ENCODE measurements at regions of chr12 and their contacts with region 1.

Region 1: DNA sequence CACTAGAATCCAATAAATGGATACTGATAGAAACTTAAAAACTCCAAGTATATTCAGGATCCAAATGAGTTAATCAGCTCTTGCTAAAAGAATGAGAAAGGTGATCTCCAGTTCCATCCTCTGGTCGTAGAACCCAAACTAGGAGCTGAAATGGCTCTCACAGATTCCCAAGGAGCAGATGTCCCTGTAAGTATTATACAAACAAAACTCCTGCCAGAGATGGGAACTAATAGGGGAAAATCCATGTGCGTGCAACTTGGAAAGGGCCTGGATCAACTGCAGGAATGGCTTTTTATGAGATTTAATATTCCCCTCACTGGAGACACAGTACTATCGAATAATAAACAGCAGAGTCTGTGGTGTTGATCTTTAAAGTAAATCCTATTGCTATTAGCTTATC is 309.2 kb upstream of the TBX3 start:
- DNase-seq: no peak
- H3K4me3 ChIP-seq: no peak overlapping the region
- H3K27ac ChIP-seq: no peak overlapping the region
- H3K4me1 ChIP-seq: no peaks in the 10 kb centered on the region
- H3K27me3 ChIP-seq: no peaks in the 10 kb centered on the region
- CTCF ChIP-seq: no peak
- POLR2A ChIP-seq: no peak

Region 2: GRCh38 chr12:114692558-114693480 is 300.3 kb before region 1 on chr12:
- intact Hi-C with region 1: no loop called
- DNase-seq: no peak
- H3K4me3 ChIP-seq: peak overlapping the region; percentile 33 to 80 (median 49)
- H3K27ac ChIP-seq: peak overlapping the region; percentile 87 to 94
- H3K4me1 ChIP-seq: no peaks in the 10 kb centered on the region
- H3K27me3 ChIP-seq: peaks cover 0 to 9% of the 10 kb centered on the region in 2 donors
- CTCF ChIP-seq: peak in 1 of 3 donors; percentile 13
- POLR2A ChIP-seq: no peak

Region 3: GRCh38 chr12:115032521-115032920 is 39.4 kb after region 1 on chr12:
- intact Hi-C with region 1: no loop called
- DNase-seq: no peak
- H3K4me3 ChIP-seq: no peak overlapping the region
- H3K27ac ChIP-seq: no peak overlapping the region
- H3K4me1 ChIP-seq: no peaks in the 10 kb centered on the region
- H3K27me3 ChIP-seq: no peaks in the 10 kb centered on the region
- CTCF ChIP-seq: no peak
- POLR2A ChIP-seq: no peak

Region 4: GRCh38 chr12:115044073-115044472 is 50.9 kb after region 1 on chr12:
- intact Hi-C with region 1: no loop called
- DNase-seq: no peak
- H3K4me3 ChIP-seq: no peak overlapping the region
- H3K27ac ChIP-seq: no peak overlapping the region
- H3K4me1 ChIP-seq: no peaks in the 10 kb centered on the region
- H3K27me3 ChIP-seq: no peaks in the 10 kb centered on the region
- CTCF ChIP-seq: no peak
- POLR2A ChIP-seq: no peak

Region 5: GRCh38 chr12:115404761-115405470 is 411.8 kb after region 1 on chr12:
- intact Hi-C with region 1: loop called (anchors 5 kb)
- DNase-seq: peak in 1 of 2 donors; percentile 59
- H3K4me3 ChIP-seq: no peak overlapping the region
- H3K27ac ChIP-seq: peak overlapping the region in 1 of 2 donors; percentile 32
- H3K4me1 ChIP-seq: no peaks in the 10 kb centered on the region
- H3K27me3 ChIP-seq: no peaks in the 10 kb centered on the region
- CTCF ChIP-seq: no peak
- POLR2A ChIP-seq: no peak

Measured in breast epithelium (tissue), 4 donors.